ENCODE measurements at regions of chr2 and their contacts with region 1.

Region 1: GRCh38 chr2:45771261-45771660 is 119.8 kb downstream of the PRKCE start:
- DNase-seq: peak; percentile 51 to 65 (median 55)
- H3K4me3 ChIP-seq: peak overlapping the region; percentile 11
- H3K27ac ChIP-seq: peak overlapping the region; percentile 51 to 63
- H3K4me1 ChIP-seq: peaks cover 2% of the 10 kb centered on the region
- H3K27me3 ChIP-seq: no peaks in the 10 kb centered on the region
- CTCF ChIP-seq: no peak
- EP300 ChIP-seq: no peak
- POLR2A ChIP-seq: no peak

Region 2: GRCh38 chr2:45649858-45650811 is 121.1 kb before region 1 on chr2:
- intact Hi-C with region 1: loop called in 2 of 4 experiments (anchors 5 to 10 kb)
- DNase-seq: peak; percentile 72 to 83 (median 81)
- H3K4me3 ChIP-seq: peak overlapping the region; percentile 88
- H3K27ac ChIP-seq: peak overlapping the region; percentile 100
- H3K4me1 ChIP-seq: peaks cover 5% of the 10 kb centered on the region
- H3K27me3 ChIP-seq: no peaks in the 10 kb centered on the region
- CTCF ChIP-seq: no peak
- EP300 ChIP-seq: no peak
- POLR2A ChIP-seq: no peak

Measured in ovary (tissue), 10 donors.